Ovary (tissue), 10 donors: ENCODE measurements at regions of chr11 and their contacts with region 1.

Region 1: GRCh38 chr11:66438504-66439466 is at the start of gene MRPL11:
- DNase-seq: peak; percentile 85 to 91 (median 88)
- H3K4me3 ChIP-seq: peak within 1 kb of the TSS; percentile 58
- H3K27ac ChIP-seq: peak within 1 kb of the TSS; percentile 86 to 90
- H3K4me1 ChIP-seq: peaks cover 5% of the 10 kb centered on the region
- H3K27me3 ChIP-seq: no peaks in the 10 kb centered on the region
- CTCF ChIP-seq: peak; percentile 51 to 73 (median 64)
- EP300 ChIP-seq: no peak
- POLR2A ChIP-seq: no peak
- total RNA-seq, gene MRPL11: 30.9 to 53.5 (median 44.1) TPM

Region 2: DNA sequence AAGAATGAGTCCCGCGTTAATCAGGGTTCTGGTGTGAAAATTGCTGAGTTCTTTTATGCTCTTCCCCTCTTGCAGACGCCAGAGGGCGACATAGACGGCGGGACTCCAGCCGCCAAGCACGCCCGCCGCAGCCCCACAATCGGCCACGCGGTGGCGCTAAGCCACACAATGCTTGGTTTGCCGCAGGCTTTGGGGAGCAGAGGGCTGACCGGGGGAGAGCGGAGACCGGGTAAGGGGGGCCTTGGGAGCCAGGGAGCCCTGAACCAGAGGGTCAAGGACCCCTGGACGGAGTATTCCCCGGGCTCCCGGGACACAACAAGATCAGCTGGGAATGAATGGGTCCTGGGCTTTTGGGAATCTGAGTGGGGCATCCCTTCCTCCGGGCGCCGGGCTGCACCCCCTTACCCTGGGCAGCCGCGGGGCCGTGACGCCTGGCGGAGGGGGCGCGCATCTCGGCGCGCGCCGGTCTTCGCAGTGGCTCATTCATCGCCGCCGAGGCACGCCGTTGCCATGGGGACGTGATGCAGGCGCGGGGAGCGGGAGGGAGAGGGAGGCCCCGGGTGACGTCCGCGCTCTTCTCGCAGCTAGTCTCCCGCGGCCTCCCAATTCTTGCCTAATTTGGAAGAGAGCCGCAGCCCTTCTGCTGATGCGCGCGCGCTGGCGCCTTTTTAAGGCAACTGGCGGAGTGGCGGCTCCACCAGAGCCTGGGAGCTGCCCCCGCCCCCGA is 30.1 kb before region 1 on chr11:
- intact Hi-C with region 1: loop called in 1 of 4 experiments (anchors 2 kb)
- DNase-seq: peak; percentile 90 to 96 (median 93)
- H3K4me3 ChIP-seq: peak overlapping the region; percentile 46
- H3K27ac ChIP-seq: peak overlapping the region; percentile 26 to 43
- H3K4me1 ChIP-seq: no peaks in the 10 kb centered on the region
- H3K27me3 ChIP-seq: no peaks in the 10 kb centered on the region
- CTCF ChIP-seq: peak; percentile 99 to 100 (median 100)
- EP300 ChIP-seq: peak; percentile 35
- POLR2A ChIP-seq: peak; percentile 27